ENCODE measurements at regions of chr16 and their contacts with region 1.

Region 1: DNA sequence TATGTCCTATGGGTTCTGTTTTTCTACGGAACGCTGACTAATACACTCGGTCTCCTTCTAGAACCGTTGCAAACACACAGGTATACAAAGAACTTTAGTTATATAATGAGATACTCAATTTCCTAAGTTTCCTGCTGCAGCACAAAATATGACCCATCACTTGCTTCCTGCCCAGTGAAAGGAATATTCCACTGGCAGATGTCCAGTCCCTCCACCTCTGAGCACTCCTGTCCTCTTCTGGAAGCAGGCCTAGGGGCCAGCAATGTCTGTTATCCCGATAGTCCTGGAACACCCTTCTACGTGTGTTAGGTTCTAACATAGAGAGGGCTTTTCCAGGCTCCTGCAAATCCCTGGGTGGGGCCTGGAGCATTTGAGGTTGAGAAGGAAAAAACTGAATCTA is 32.7 kb downstream of the ADAMTS18 start:
- DNase-seq: no peak
- H3K4me3 ChIP-seq: no peak overlapping the region
- H3K27ac ChIP-seq: no peak overlapping the region
- H3K4me1 ChIP-seq: no peaks in the 10 kb centered on the region
- H3K27me3 ChIP-seq: peaks cover 3% of the 10 kb centered on the region
- CTCF ChIP-seq: no peak

Region 2: DNA sequence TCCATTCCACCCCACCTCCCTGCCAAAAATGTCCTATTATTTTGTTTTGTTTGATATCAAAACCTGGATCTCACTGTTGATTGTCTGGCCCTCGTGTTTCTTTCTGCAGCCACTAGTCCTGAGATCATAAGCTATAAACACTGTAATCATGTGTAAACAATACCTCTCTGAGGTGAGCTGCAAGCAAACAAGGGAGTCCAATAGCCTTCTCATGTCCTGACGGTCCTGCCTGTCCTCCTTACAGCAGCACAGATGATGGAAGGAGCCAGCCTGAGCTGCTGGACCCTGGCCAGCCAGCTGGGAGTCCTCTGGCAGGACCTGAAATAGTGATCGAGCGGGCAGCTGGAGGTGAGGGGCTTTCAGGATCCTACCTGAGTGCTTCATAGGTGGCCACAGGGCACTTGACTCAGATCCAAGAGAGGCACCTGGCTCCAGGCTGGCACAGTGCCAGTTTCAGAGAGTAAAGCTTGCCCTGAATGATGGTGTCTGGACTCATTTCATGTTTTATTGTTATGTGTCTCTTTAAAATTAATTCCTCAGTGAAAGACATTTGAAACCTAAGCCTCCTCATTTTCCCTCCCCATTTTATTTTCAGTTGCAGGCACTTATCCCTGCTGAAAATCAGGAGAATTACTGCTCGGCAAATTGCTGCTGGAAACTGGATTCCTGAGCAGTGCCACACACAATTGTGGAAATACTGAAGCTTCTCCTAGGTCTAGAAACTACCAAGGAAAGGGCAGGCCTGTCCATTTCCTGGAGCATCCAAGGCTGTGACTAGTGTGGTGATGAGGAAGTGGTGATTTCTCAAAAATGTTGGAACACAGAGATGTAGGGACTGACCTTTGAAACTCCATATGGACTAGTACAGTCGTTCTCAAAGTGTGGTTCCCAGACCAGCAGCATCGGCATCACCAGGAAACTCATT is 48.7 kb after region 1 on chr16:
- intact Hi-C with region 1: loop called (anchors 5 kb)
- DNase-seq: no peak
- H3K4me3 ChIP-seq: no peak overlapping the region
- H3K27ac ChIP-seq: no peak overlapping the region
- H3K4me1 ChIP-seq: no peaks in the 10 kb centered on the region
- H3K27me3 ChIP-seq: no peaks in the 10 kb centered on the region
- CTCF ChIP-seq: no peak